Activated B cell treated with CpG ODN at 0.5 μM for 24 hours (primary cell): ENCODE measurements at regions of chr1 and their contacts with region 1.

Region 1: DNA sequence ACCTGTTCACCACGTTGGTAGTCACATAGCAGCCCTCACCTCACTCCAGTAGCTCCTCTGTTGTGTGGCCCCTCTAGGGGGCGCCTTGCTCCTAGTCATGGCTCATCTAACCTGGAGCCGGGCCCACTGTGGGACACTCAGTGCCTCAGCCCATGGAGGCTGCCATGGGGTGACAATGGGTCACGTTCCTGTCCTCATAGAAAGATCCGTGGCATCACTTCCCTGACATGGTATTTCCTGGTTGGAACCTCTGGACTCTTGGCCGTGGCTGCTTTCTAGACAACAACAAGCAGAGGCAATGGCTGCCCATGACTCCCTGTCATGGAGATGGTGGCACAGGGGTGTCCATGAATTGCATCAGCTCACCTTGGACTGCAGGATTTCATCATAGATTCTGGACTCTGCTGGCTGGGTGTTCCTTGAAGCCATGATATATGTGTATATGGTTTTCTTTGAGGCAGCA is 27.5 kb upstream of the SLAMF6 start:
- DNase-seq: no peak
- ATAC-seq: no peak
- H3K4me3 Mint-ChIP-seq: no peak overlapping the region
- H3K27ac Mint-ChIP-seq: peak overlapping the region; percentile 90
- H3K4me1 Mint-ChIP-seq: peaks cover 86% of the 10 kb centered on the region
- H3K27me3 Mint-ChIP-seq: no peaks in the 10 kb centered on the region
- CTCF ChIP-seq: no peak

Region 2: DNA sequence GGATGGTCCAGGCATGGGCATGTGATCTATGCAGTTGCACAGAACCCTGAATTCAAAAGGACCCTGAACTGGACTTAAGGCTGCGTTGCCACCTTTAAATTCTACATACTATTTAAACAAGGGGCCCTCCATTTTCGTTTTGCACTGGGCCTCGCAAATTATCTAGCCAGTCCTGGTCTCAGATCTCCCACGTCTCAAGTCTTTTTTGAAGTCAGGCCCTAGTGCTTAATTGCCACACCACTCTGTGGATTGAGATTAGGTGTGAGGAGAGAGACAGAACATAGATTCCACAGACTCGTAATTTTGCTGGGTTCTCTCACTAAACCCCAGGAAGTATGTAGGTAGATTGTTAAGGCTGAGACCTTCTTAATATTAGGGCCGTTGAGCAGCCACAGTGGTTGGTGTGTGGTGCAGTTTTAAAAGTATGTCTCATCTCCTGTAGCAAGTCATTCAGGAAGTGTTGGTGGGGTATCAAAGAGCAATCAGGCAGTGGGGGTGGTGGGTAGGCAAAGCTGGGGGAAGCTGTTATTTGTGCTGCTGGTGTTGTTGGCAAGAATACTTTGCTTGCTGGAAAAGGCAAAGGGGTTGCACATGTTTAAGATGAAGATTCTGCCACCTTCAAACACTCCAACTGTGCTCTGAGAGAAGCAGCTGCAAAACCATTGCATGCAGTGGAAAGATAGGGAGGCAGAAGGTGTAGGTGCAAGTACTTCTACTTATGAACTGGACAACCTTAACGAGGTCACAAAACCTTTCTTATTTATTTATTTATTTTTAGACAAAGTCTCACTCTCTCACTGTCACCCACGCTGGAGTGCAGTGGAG is 17.5 kb after region 1 on chr1:
- CTCF ChIA-PET with region 1: interaction called, 3 read pairs
- POLR2A ChIA-PET with region 1: interaction called, 6 read pairs
- intact Hi-C with region 1: loop called (anchors 2 kb)
- DNase-seq: no peak
- ATAC-seq: peak; percentile 62
- H3K4me3 Mint-ChIP-seq: peak overlapping the region; percentile 21
- H3K27ac Mint-ChIP-seq: peak overlapping the region; percentile 54
- H3K4me1 Mint-ChIP-seq: peaks cover 76% of the 10 kb centered on the region
- H3K27me3 Mint-ChIP-seq: no peaks in the 10 kb centered on the region
- CTCF ChIP-seq: no peak